ENCODE measurements at regions of chr6 and their contacts with region 1.

Region 1: GRCh38 chr6:73548458-73549446 is 27.9 kb upstream of the EEF1A1 start:
- DNase-seq: no peak
- ATAC-seq: no peak
- H3K4me3 Mint-ChIP-seq: no peak overlapping the region
- H3K27ac Mint-ChIP-seq: no peak overlapping the region
- H3K4me1 Mint-ChIP-seq: no peaks in the 10 kb centered on the region
- H3K27me3 Mint-ChIP-seq: no peaks in the 10 kb centered on the region
- CTCF ChIP-seq: no peak

Region 2: GRCh38 chr6:73558624-73559398 is 10.1 kb after region 1 on chr6:
- CTCF ChIA-PET with region 1: interaction called, 41 read pairs
- POLR2A ChIA-PET with region 1: no interaction called
- DNase-seq: no peak
- ATAC-seq: peak; percentile 95
- H3K4me3 Mint-ChIP-seq: no peak overlapping the region; the same call in 1 of the 2 replicates
- H3K27ac Mint-ChIP-seq: no peak overlapping the region
- H3K4me1 Mint-ChIP-seq: peaks cover 26% of the 10 kb centered on the region
- H3K27me3 Mint-ChIP-seq: no peaks in the 10 kb centered on the region
- CTCF ChIP-seq: no peak

Region 3: GRCh38 chr6:73566954-73567591 is 18.3 kb after region 1 on chr6:
- CTCF ChIA-PET with region 1: interaction called, 16 read pairs
- POLR2A ChIA-PET with region 1: interaction called, 3 read pairs
- DNase-seq: no peak
- ATAC-seq: peak; percentile 8; the same call in 1 of the 2 replicates
- H3K4me3 Mint-ChIP-seq: no peak overlapping the region
- H3K27ac Mint-ChIP-seq: peak overlapping the region; percentile 73
- H3K4me1 Mint-ChIP-seq: peaks cover 32% of the 10 kb centered on the region
- H3K27me3 Mint-ChIP-seq: no peaks in the 10 kb centered on the region
- CTCF ChIP-seq: no peak

Measured in WTC11 (cell line).